GM12878 (cell line): ENCODE measurements at regions of chr10 and their contacts with region 1.

Region 1: DNA sequence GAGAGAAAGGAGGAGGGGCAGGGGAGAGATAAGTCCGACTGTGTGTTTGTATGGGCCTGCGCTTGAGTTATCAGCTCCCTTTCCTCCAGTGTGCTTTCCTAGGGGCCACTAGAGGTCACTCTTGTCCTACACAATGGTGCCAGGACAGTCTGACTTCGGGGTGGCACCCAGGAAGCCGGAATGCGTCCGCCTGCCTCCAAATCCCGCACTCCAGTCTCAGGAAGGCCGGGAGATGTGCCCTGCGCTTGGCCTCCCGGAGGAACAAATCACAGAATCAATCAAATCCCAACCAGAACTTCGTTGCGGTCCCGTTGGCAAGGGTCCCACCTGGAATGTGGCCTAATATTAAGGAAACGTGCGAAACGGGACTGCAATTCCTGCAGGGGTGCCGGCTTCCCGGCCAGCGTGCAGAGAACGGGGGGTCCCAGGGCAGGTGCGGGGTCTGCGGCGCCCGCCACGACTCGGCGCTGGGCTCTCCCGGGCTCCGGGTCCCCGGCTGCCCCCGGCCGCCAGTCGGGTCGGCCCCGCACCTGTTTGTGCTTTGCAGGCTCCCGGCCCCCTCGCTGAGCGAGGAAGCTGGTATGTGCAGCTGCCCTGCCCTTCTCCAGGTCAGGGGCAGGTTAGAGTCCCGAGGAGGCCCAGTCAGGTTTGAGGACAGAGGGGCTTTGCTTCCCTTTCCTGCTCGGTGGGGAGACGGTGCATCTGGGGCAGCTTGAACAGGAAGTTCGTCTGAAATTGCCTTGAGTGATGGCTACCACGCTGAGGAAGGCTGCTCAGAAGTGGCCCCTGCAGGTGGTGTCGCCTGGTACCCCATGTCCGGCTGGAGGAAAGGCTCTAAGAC is 21.0 kb upstream of the HPS1 start:
- DNase-seq: peak; percentile 50
- ATAC-seq: peak; percentile 100
- H3K4me3 ChIP-seq: peak overlapping the region; percentile 71
- H3K27ac ChIP-seq: no peak overlapping the region
- H3K4me1 ChIP-seq: no peaks in the 10 kb centered on the region
- H3K27me3 ChIP-seq: peaks cover 0 to 5% of the 10 kb centered on the region in 2 experiments; a peak in 3 of 4 replicates
- CTCF ChIP-seq: peak; percentile 86 to 94 (median 87)
- EP300 ChIP-seq: no peak
- POLR2A ChIP-seq: peak; percentile 34; the same call in 1 of the 2 replicates
- RAD21 ChIP-seq: peak; percentile 96

Region 2: GRCh38 chr10:98664331-98665042 is 196.8 kb after region 1 on chr10:
- CTCF ChIA-PET with region 1: interaction called, 20 read pairs
- POLR2A ChIA-PET with region 1: no interaction called
- RAD21 ChIA-PET with region 1: interaction called, 11 read pairs
- SMC1A ChIA-PET with region 1: interaction called, 4 read pairs
- in situ Hi-C with region 1: loop called (anchors 5 kb)
- intact Hi-C with region 1: loop called (anchors 1 kb)
- DNase-seq: peak; percentile 3
- ATAC-seq: peak; percentile 86
- H3K4me3 ChIP-seq: no peak overlapping the region
- H3K27ac ChIP-seq: no peak overlapping the region
- H3K4me1 ChIP-seq: no peaks in the 10 kb centered on the region
- H3K27me3 ChIP-seq: peaks cover 0 to 3% of the 10 kb centered on the region in 2 experiments; a peak in 1 of 4 replicates
- CTCF ChIP-seq: peak; percentile 59 to 69 (median 61)
- EP300 ChIP-seq: no peak
- POLR2A ChIP-seq: no peak
- RAD21 ChIP-seq: peak; percentile 79

Region 3: DNA sequence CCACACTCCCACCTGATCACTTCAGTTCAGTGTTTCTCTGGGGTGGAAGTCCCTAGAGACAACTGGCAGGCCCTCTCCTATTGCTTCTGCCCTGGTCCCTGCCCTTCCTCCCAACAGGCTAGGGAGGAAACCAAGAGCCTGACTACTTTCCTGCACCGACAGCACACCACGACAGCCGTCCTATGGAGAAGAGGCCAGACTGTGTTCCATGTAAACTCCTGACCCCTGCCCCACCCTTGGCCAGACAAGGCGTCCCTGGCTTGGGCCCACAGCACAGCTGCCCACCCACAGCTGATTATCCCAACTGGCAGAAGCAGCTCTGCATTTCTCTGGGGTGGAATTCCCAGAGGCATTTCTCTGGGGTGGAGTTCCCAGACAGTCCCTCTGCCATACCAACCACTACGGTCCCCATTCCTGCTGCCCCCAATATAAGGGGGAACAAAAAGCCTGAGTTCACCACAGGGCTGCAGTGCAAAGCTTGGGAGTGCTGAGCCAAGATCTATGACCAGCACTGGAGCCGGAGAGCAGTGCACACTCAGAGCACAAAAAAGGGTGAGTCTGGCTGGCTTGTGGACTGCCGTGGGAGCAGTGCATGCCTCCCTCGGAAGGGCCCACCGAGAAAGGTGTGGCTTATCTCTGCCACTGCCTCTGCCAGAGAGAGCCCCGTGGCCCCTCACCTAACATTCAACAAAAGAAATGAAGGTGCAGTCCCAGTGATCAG is 574.5 kb after region 1 on chr10:
- CTCF ChIA-PET with region 1: no interaction called
- POLR2A ChIA-PET with region 1: no interaction called
- RAD21 ChIA-PET with region 1: no interaction called
- SMC1A ChIA-PET with region 1: no interaction called
- in situ Hi-C with region 1: loop called (anchors 10 kb)
- intact Hi-C with region 1: loop called (anchors 1 kb)
- DNase-seq: no peak
- ATAC-seq: no peak
- H3K4me3 ChIP-seq: no peak overlapping the region
- H3K27ac ChIP-seq: no peak overlapping the region
- H3K4me1 ChIP-seq: no peaks in the 10 kb centered on the region
- H3K27me3 ChIP-seq: no peaks in the 10 kb centered on the region
- CTCF ChIP-seq: no peak
- EP300 ChIP-seq: no peak
- POLR2A ChIP-seq: no peak
- RAD21 ChIP-seq: no peak

Region 4: GRCh38 chr10:99248824-99249223 is 781.1 kb after region 1 on chr10:
- CTCF ChIA-PET with region 1: interaction called, 29 read pairs
- POLR2A ChIA-PET with region 1: no interaction called
- RAD21 ChIA-PET with region 1: interaction called, 36 read pairs
- SMC1A ChIA-PET with region 1: interaction called, 16 read pairs
- in situ Hi-C with region 1: loop called (anchors 5 kb)
- intact Hi-C with region 1: loop called (anchors 1 kb)
- DNase-seq: no peak
- ATAC-seq: no peak
- H3K4me3 ChIP-seq: no peak overlapping the region
- H3K27ac ChIP-seq: no peak overlapping the region
- H3K4me1 ChIP-seq: no peaks in the 10 kb centered on the region
- H3K27me3 ChIP-seq: no peaks in the 10 kb centered on the region
- CTCF ChIP-seq: no peak
- EP300 ChIP-seq: no peak
- POLR2A ChIP-seq: no peak
- RAD21 ChIP-seq: no peak